ENCODE measurements at regions of chr14 and their contacts with region 1.

Region 1: GRCh38 chr14:90545966-90546751 is 149.3 kb downstream of the CALM1 start:
- DNase-seq: no peak
- ATAC-seq: peak; percentile 90

Region 2: DNA sequence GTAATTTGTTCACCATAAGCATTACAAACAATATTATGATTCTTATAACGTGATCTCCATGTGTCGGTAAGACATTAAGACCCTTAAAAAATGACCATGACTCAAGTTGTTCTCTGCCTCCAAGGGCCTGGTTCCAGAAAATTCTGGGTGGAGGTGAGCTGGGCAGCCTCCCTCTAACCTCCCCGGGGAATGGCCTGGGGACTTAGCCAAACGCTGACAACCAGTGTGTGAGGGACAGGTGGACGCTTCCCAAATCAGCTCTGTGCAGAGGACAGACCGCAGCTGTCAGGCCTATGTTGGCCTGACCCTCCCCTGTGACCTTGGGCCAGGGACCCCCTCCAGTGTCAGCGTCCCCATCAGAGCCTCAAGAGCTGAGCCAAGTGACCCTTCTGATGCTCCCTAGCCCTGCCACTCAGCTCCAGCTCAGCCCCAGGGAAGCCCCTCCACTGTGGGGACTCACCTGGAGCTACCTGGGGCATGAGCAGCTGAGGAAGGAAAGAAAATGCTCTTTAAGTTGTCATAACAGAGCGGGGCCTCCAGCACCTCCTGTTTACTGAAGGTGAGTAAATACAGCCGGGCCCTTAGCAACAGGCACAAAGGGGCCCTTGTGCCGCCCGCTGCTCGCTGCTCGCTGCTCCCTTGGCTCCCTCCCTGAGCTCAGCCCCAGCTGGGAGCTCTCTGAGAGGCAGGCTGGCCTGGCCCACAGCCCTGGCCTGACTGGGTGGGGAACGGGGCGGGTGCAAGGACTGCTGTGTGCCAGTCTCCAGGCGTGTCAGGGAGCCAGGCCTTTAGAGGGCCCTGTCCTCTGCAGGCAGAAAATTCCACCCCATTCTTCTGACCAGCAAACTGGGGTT is 32.8 kb before region 1 on chr14:
- intact Hi-C with region 1: loop called (anchors 5 kb)
- DNase-seq: peak; percentile 91
- ATAC-seq: peak; percentile 91

Measured in Right ventricle myocardium inferior (tissue), 1 donor.